Caco-2 (cell line): ENCODE measurements at regions of chr18 and their contacts with region 1.

Region 1: DNA sequence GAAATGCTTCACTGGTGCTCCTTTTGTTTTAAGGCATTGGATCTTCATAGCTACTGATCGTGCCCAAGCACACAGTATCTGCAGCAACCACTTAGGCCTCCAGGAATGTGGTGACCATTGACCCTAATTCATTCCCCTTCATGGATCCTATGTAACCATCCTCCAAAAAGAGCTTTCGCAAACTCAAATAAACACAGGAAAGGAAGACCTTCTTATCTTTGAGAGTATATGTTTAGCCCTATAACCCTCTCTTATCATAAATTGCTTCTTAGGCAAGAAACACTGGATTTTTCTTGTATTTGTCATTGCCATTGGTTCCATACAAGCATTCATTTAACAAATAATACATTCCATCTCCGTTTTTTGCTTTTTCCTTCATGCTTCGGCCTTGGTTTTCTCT is 4.1 kb upstream of the TTR start:
- DNase-seq: peak; percentile 66 to 73
- H3K4me3 ChIP-seq: no peak overlapping the region
- H3K4me3 Mint-ChIP-seq: peak overlapping the region; percentile 49
- H3K27ac Mint-ChIP-seq: peak overlapping the region; percentile 79
- H3K4me1 ChIP-seq: peaks cover 51% of the 10 kb centered on the region
- H3K4me1 Mint-ChIP-seq: peaks cover 27% of the 10 kb centered on the region
- H3K27me3 ChIP-seq: no peaks in the 10 kb centered on the region
- H3K27me3 Mint-ChIP-seq: no peaks in the 10 kb centered on the region
- CTCF ChIP-seq: no peak

Region 2: GRCh38 chr18:31610286-31611205 is 23.0 kb after region 1 on chr18:
- CTCF ChIA-PET with region 1: no interaction called
- POLR2A ChIA-PET with region 1: no interaction called
- intact Hi-C with region 1: loop called (anchors 1 kb)
- DNase-seq: peak; percentile 58 to 61
- H3K4me3 ChIP-seq: no peak overlapping the region
- H3K4me3 Mint-ChIP-seq: peak overlapping the region; percentile 4
- H3K27ac Mint-ChIP-seq: no peak overlapping the region
- H3K4me1 ChIP-seq: no peaks in the 10 kb centered on the region; the same call in 1 of the 2 replicates
- H3K4me1 Mint-ChIP-seq: peaks cover 24% of the 10 kb centered on the region
- H3K27me3 ChIP-seq: no peaks in the 10 kb centered on the region
- H3K27me3 Mint-ChIP-seq: no peaks in the 10 kb centered on the region
- CTCF ChIP-seq: peak in 1 of 2 experiments; percentile 40

Region 3: GRCh38 chr18:31648966-31649429 is 61.5 kb after region 1 on chr18:
- CTCF ChIA-PET with region 1: no interaction called
- POLR2A ChIA-PET with region 1: no interaction called
- intact Hi-C with region 1: loop called (anchors 2 kb)
- DNase-seq: peak; percentile 61 to 70
- H3K4me3 ChIP-seq: no peak overlapping the region
- H3K4me3 Mint-ChIP-seq: peak overlapping the region; percentile 37
- H3K27ac Mint-ChIP-seq: peak overlapping the region; percentile 72
- H3K4me1 ChIP-seq: peaks cover 59% of the 10 kb centered on the region
- H3K4me1 Mint-ChIP-seq: peaks cover 48% of the 10 kb centered on the region
- H3K27me3 ChIP-seq: no peaks in the 10 kb centered on the region
- H3K27me3 Mint-ChIP-seq: no peaks in the 10 kb centered on the region
- CTCF ChIP-seq: no peak

Region 4: GRCh38 chr18:31736630-31737029 is 149.1 kb after region 1 on chr18:
- CTCF ChIA-PET with region 1: no interaction called
- POLR2A ChIA-PET with region 1: no interaction called
- intact Hi-C with region 1: no loop called
- DNase-seq: no peak
- H3K4me3 ChIP-seq: no peak overlapping the region
- H3K4me3 Mint-ChIP-seq: no peak overlapping the region
- H3K27ac Mint-ChIP-seq: no peak overlapping the region
- H3K4me1 ChIP-seq: no peaks in the 10 kb centered on the region
- H3K4me1 Mint-ChIP-seq: no peaks in the 10 kb centered on the region
- H3K27me3 ChIP-seq: no peaks in the 10 kb centered on the region
- H3K27me3 Mint-ChIP-seq: no peaks in the 10 kb centered on the region
- CTCF ChIP-seq: no peak